Psoas muscle (tissue), 8 donors: ENCODE measurements at regions of chr11 and their contacts with region 1.

Region 1: DNA sequence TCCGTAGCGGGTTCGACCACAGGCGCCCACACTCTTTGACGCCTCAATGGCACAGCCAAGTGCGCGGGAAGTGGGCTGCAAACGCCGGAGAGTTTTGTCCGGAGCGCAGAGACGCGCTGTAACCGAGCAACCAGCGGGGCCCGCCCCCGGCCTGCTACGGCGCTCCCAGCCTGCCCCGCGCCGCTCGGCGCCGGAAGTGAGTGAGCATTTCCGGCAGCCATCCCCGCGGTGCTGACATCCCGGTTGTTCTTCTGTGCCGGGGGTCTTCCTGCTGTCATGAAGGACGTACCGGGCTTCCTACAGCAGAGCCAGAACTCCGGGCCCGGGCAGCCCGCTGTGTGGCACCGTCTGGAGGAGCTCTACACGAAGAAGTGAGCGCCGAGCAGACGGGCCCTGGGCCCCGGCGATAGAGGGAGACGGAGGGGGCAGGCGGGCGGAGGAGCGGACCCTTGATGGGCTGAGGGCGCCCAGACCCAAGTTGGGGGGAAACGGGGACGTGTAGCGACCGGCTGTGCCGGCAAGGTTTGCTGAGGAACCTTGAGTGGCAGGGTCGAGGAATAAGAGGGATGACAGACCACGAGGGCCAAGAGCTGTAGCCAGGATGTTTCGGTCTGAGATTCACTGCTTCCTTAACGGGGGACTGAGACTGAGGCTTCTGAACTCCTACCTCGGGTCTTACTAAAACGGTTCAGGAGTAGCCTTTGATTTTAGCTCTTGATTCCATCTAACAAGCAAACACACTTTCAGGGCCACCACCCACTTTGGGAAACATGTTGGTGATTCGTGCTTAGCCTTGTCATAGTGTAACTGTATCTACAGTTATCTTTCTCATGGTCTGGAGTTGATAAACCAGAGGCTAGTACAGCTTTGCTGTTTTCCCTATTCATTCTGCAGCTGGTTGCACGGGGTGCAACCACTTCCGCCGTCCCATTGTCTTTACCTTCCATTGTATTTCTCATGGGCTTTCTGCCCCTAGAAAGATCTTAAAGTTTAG is at the start of gene PSMD13:
- DNase-seq: peak; percentile 88 to 94
- ATAC-seq: peak; percentile 91 to 95 (median 92)
- H3K4me3 ChIP-seq: peak within 1 kb of the TSS; percentile 86
- H3K27ac ChIP-seq: peak within 1 kb of the TSS; percentile 92
- H3K4me1 ChIP-seq: peaks cover 45% of the 10 kb centered on the region
- H3K27me3 ChIP-seq: no peaks in the 10 kb centered on the region
- CTCF ChIP-seq: no peak
- total RNA-seq, gene PSMD13: 108 to 190 (median 149) TPM

Region 2: GRCh38 chr11:199782-200181 is 37.3 kb before region 1 on chr11:
- intact Hi-C with region 1: loop called in 1 of 2 experiments (anchors 5 kb)
- DNase-seq: no peak
- ATAC-seq: no peak
- H3K4me3 ChIP-seq: no peak overlapping the region
- H3K27ac ChIP-seq: no peak overlapping the region
- H3K4me1 ChIP-seq: no peaks in the 10 kb centered on the region
- H3K27me3 ChIP-seq: no peaks in the 10 kb centered on the region
- CTCF ChIP-seq: no peak

Region 3: DNA sequence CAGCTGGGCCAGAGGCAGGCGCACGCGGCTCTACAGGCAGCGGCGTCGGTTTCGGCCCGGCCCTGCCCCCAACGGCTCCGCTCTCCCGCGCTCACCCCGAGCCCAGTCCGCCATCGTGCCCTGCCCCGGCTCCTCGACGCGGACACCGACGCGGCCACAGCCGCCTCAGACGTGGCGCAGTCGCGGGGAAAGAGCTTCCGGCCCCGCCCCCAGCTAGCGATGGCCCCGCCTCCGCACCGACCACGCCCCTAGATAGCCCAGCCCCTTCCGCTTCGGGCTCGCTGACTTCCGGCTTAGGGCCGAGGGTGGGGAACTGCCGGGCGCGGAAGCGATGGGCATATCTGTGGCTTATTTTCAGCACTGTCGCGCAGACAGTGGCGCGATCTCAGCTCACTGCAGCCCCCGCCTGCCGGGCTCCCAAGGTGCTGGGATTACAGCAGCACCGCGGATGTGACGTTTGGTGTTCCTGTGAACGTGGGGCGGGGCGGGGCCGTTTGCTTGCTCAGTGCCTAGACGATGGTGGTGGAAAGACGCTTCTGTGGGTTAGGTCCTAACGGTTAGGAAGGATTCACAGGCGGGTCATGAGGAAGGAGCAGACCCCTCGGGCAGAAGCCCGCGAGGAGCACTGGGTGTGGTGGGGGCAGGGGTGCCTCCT is 29.7 kb before region 1 on chr11 and contains the starts of genes BET1L and RIC8A:
- intact Hi-C with region 1: loop called (anchors 2 to 5 kb)
- DNase-seq: peak; percentile 93 to 99
- ATAC-seq: peak; percentile 91 to 93 (median 92)
- H3K4me3 ChIP-seq: peak within 1 kb of the TSS; percentile 97
- H3K27ac ChIP-seq: peak within 1 kb of the TSS; percentile 99
- H3K4me1 ChIP-seq: peaks cover 24% of the 10 kb centered on the region
- H3K27me3 ChIP-seq: no peaks in the 10 kb centered on the region
- CTCF ChIP-seq: no peak
- total RNA-seq, gene BET1L: 11.8 to 27.7 (median 20.2) TPM
- total RNA-seq, gene RIC8A: 34.4 to 54.8 (median 37.9) TPM

Region 4: GRCh38 chr11:492427-493226 is 255.6 kb after region 1 on chr11:
- intact Hi-C with region 1: no loop called
- DNase-seq: peak in 1 of 2 donors; percentile 49
- ATAC-seq: no peak
- H3K4me3 ChIP-seq: no peak overlapping the region
- H3K27ac ChIP-seq: no peak overlapping the region
- H3K4me1 ChIP-seq: no peaks in the 10 kb centered on the region
- H3K27me3 ChIP-seq: no peaks in the 10 kb centered on the region
- CTCF ChIP-seq: no peak

Region 5: DNA sequence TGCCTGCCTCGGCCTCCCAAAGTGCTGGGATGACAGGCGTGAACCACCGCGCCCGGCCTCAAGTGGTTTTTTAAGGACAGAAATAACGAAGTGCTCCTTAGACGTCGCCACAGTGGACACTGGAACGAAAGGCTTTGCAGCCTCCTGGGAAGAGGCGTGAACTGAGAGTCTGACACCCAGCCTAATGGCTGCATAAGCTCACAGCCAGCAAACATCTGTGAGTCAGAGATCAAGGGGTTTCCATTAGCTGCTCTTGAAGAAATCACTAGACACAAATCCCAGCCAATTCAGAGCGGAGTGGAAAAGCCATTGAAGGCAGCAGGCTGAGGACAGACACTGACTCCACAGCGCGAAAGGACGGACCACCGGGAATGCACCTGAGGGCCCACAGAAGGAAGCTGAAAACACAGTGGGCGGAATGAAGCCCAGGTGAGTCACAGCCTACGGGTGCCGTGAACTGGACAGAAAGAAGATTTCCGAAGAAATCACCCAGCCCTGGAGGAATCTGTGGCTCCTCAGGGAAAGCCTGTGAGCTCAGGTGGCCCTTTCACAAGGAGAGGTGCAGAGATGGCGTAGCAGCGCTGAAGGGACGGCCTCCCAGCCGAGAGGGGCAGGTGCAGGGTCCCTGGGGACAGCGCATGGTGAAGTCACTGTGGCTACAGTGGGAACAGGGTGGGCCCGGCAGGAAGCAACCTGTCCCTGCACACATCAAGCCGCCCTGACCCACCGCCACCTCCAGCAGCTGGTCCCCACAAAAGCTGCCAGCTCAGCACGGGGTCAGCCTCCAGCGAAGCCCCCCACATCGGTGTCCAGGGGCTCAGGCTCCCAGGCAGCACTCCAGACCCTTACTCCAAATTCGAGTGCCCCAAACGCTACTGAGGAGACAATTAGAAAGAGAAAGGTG is 311.9 kb after region 1 on chr11:
- intact Hi-C with region 1: no loop called
- DNase-seq: peak in 1 of 2 donors; percentile 9
- ATAC-seq: no peak
- H3K4me3 ChIP-seq: no peak overlapping the region
- H3K27ac ChIP-seq: no peak overlapping the region
- H3K4me1 ChIP-seq: no peaks in the 10 kb centered on the region
- H3K27me3 ChIP-seq: peaks cover 0 to 25% (median 7%) of the 10 kb centered on the region in 3 donors
- CTCF ChIP-seq: no peak